ENCODE measurements at regions of chr13 and their contacts with region 1.

Region 1: DNA sequence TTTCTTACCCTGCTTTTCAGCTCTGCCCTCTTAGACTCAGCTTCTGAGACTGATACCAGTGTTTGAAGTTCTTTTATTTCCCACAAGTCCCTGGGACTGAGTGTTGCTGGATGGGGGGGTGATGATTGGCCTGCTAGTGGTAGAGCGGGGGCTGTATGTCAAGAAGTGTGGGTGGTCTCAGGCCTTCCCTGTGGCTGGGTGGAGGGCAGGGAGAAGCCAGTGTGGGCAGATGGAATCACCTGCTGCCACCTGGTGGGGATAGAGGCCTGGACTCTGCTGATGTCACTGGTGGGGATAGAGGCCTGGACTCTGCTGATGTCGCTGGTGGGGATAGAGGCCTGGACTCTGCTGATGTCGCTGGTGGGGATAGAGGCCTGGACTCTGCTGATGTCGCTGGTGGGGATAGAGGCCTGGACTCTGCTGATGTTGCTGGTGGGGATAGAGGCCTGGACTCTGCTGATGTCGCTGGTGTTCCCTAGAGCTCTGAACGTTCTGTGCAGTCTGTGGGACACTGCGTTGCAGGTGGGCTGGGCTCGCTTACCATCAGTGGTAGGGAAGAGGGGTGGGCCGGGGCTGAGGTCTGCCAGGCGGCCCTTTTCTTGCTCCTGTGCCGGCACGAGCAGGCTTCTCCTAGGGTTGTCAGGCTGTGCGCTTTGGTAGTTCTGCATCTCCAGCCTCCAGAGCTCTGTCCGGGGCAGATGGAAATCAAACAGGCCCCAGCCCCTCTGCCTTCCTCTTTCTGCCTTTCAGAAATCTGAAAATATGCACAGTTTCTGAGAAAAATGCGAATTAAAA is 101.3 kb downstream of the ARHGEF7 start:
- DNase-seq: peak; percentile 22
- H3K4me3 Mint-ChIP-seq: no peak overlapping the region
- H3K27ac Mint-ChIP-seq: no peak overlapping the region
- H3K4me1 Mint-ChIP-seq: no peaks in the 10 kb centered on the region
- H3K27me3 Mint-ChIP-seq: no peaks in the 10 kb centered on the region
- CTCF ChIP-seq: no peak

Region 2: GRCh38 chr13:111066544-111066943 is 149.8 kb before region 1 on chr13:
- CTCF ChIA-PET with region 1: no interaction called
- intact Hi-C with region 1: loop called (anchors 2 kb)
- DNase-seq: no peak
- H3K4me3 Mint-ChIP-seq: no peak overlapping the region
- H3K27ac Mint-ChIP-seq: no peak overlapping the region
- H3K4me1 Mint-ChIP-seq: no peaks in the 10 kb centered on the region
- H3K27me3 Mint-ChIP-seq: no peaks in the 10 kb centered on the region
- CTCF ChIP-seq: no peak

Measured in Calu3 (cell line).